ENCODE measurements at regions of chr12 and their contacts with region 1.

Region 1: DNA sequence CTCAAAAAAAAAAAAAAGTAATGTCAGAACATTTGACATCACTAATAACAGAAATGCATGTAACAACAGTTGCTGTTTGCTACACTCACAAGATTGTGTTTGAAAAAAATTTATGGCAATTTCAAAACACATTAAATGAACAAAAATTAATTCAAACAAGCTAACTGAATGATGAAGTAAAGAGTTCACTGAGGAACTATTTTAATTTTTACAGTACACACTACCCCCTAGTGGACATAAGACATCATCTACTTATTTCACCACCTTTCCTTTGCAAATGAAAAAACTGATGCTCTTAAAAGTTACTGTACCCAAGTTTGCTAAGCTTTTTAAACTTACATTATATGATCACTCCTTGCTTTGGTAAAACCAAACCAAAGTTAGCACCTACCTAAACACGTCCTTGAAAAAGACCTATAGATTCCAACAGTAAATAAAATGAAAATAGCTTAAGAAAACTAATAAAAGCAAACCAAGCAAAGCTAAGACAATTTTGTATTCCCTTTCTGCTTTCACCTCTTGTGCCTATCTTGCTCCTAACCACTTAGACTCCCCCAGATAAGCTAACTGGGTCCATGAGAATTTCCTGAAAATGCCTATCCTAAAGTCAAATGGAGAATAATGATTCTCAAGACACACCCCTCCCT is 22.2 kb downstream of the UBE2N start:
- DNase-seq: peak; percentile 49
- H3K4me3 Mint-ChIP-seq: no peak overlapping the region
- H3K27ac Mint-ChIP-seq: no peak overlapping the region
- H3K4me1 Mint-ChIP-seq: peaks cover 32% of the 10 kb centered on the region
- H3K27me3 Mint-ChIP-seq: no peaks in the 10 kb centered on the region
- CTCF ChIP-seq: peak; percentile 43

Region 2: GRCh38 chr12:93397412-93397811 is 22.1 kb before region 1 on chr12:
- CTCF ChIA-PET with region 1: interaction called, 13 read pairs
- POLR2A ChIA-PET with region 1: interaction called, 3 read pairs
- intact Hi-C with region 1: no loop called
- DNase-seq: no peak
- H3K4me3 Mint-ChIP-seq: no peak overlapping the region
- H3K27ac Mint-ChIP-seq: no peak overlapping the region
- H3K4me1 Mint-ChIP-seq: no peaks in the 10 kb centered on the region
- H3K27me3 Mint-ChIP-seq: no peaks in the 10 kb centered on the region
- CTCF ChIP-seq: no peak

Region 3: DNA sequence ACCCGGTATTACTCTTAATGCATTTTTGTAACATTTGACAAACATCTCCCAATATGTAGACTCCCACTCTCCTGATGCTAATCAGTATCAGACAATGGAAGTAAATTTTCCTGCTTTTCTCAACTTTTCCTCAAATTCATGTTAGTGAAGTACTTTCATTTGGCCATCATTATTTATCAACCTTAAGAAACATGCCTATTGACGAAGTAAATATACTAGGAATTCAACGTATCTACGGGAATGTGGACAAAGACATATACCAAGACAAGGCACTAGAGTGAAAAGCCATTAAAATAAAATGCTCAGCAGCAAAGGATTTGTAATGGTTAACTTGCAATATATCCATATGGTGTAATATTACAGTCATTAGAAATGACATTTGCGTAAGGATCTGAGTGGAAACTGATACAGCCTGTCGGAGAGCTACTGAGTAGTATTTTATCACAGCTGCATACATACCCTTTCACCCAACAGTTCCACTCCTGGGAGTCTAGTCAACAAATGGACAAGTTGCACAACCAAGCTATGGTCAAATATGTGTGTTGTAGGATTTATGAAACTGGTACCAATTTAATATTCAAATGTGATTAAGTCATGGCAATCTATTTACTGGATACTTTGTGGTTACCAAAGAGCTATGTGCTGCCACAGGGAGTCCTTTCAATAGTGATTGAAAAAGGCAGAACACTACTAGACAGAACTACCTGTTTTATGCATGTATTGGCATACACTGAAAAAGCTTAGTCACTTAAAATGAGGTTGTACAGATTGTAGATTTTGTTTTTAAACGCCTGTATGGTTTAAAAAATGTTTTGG is 15.3 kb before region 1 on chr12:
- CTCF ChIA-PET with region 1: interaction called, 29 read pairs
- POLR2A ChIA-PET with region 1: interaction called, 4 read pairs
- intact Hi-C with region 1: no loop called
- DNase-seq: no peak
- H3K4me3 Mint-ChIP-seq: no peak overlapping the region
- H3K27ac Mint-ChIP-seq: no peak overlapping the region
- H3K4me1 Mint-ChIP-seq: no peaks in the 10 kb centered on the region
- H3K27me3 Mint-ChIP-seq: no peaks in the 10 kb centered on the region
- CTCF ChIP-seq: no peak

Region 4: DNA sequence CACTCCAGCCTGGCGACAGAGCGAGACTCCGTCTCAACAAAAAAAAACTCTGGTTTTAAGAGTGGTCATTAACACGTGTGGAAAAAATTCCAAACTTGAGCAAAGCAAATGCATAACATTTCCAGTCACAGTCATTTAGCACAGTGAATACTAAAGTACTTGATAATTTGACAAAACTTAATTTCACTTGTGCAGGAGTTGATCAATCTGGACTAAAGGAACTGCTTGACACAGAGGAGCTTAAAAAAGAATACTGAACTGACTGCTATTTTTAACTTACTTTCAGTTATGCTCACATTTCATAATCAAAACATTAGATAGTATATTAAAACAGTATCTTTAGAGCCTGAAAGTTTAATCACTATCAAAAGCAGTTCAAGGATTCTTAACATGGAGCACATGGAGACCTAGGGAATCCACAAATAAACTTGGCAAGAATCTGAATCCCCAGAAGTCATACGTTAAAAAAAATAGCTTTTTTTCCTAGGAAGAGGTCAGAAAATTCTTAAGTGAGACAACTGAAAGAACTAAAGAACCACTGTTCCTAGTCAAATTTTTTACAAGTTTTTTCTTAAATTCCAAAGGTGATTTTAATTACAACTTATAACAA is 14.8 kb after region 1 on chr12:
- CTCF ChIA-PET with region 1: interaction called, 13 read pairs
- POLR2A ChIA-PET with region 1: interaction called, 8 read pairs
- intact Hi-C with region 1: no loop called
- DNase-seq: no peak
- H3K4me3 Mint-ChIP-seq: no peak overlapping the region
- H3K27ac Mint-ChIP-seq: no peak overlapping the region
- H3K4me1 Mint-ChIP-seq: peaks cover 33% of the 10 kb centered on the region
- H3K27me3 Mint-ChIP-seq: no peaks in the 10 kb centered on the region
- CTCF ChIP-seq: no peak

Region 5: DNA sequence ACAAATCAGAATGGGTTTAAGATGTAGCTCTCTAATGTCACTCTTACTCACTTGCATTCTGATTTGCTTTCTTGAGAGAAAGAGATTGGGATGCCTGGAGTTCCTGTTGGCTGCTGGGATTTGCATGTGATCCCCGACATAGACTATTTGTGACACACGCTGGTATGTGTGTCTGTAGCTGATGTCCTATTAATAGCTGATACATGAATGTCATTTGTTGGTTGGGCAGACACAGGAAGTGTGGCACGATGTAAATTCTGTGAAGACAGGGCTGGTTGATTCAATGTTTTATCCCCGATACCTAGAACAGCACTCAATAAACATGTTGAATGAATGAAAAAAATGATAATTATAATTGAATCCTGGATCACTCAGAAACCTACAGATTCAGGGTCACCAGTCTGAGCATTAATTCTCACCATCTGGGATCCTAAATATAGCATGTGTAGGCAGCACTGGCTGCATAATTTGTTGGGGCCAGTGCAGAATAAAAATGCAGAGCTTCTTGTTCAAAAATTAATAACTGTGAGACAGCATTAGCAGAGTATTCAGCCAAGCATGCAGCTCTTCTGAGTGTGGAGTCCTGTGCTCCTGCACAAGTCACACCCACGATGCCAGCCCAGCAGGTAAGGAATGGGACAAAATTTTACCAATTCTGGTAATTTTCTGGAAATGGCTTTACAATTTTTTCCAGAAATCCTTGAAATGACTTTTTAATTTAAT is 117.4 kb after region 1 on chr12:
- CTCF ChIA-PET with region 1: no interaction called
- POLR2A ChIA-PET with region 1: no interaction called
- intact Hi-C with region 1: no loop called
- DNase-seq: no peak
- H3K4me3 Mint-ChIP-seq: no peak overlapping the region
- H3K27ac Mint-ChIP-seq: no peak overlapping the region
- H3K4me1 Mint-ChIP-seq: no peaks in the 10 kb centered on the region
- H3K27me3 Mint-ChIP-seq: no peaks in the 10 kb centered on the region
- CTCF ChIP-seq: no peak

Region 6: GRCh38 chr12:93722835-93723538 is 303.5 kb after region 1 on chr12:
- CTCF ChIA-PET with region 1: no interaction called
- POLR2A ChIA-PET with region 1: no interaction called
- intact Hi-C with region 1: no loop called
- DNase-seq: peak; percentile 91
- H3K4me3 Mint-ChIP-seq: peak overlapping the region; percentile 64
- H3K27ac Mint-ChIP-seq: no peak overlapping the region
- H3K4me1 Mint-ChIP-seq: peaks cover 12% of the 10 kb centered on the region
- H3K27me3 Mint-ChIP-seq: no peaks in the 10 kb centered on the region
- CTCF ChIP-seq: no peak

Region 7: DNA sequence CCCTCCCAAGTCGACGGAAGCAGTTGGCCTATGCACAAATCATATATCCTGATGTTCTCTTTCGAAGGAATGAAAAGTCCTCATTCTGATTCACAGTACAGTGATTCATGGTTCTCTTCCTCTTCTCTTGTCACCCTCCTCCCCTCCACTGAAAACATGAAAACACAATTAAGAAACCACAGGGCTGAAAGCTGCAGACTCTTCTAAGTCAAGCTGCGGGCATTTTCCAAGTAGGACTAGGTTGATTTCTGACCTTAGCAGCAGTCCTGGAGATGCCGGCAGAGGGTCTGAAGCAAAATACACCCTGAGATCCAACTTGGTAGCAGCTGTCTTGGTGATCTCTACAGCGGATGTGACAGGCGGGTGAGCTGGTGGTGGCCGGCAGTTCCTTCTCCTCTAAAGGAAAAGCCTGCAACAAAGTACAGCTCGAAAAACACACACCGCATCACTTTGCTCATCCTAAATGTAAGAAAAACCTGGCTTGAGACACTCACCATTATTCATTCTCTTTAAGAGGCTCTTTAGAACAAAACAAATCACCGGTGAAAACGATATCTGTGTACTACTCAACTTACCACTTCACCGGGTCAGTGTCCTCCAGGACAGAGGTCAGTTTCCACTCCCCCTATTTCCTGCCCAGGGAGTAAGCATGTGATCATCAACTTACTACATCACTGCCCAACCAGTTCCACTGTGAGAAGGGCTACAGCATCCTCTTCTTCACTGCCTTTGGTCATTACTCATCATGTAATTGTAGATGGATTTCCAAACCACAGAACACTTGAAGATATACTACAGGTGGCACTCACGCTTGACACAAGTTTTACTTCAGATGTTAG is 1224.8 kb after region 1 on chr12:
- CTCF ChIA-PET with region 1: no interaction called
- POLR2A ChIA-PET with region 1: no interaction called
- intact Hi-C with region 1: no loop called
- DNase-seq: peak; percentile 82
- H3K4me3 Mint-ChIP-seq: peak overlapping the region; percentile 62
- H3K27ac Mint-ChIP-seq: peak overlapping the region; percentile 77
- H3K4me1 Mint-ChIP-seq: peaks cover 31% of the 10 kb centered on the region
- H3K27me3 Mint-ChIP-seq: no peaks in the 10 kb centered on the region
- CTCF ChIP-seq: no peak

Measured in MCF 10A (cell line).